B cell (primary cell): ENCODE measurements at regions of chr5 and their contacts with region 1.

Region 1: GRCh38 chr5:148805326-148806290 is 20.8 kb upstream of the ADRB2 start:
- DNase-seq: peak; percentile 42
- ATAC-seq: no peak
- H3K4me3 ChIP-seq: peak overlapping the region in 1 of 5 experiments; percentile 6
- H3K4me3 Mint-ChIP-seq: peak overlapping the region; percentile 51
- H3K27ac ChIP-seq: peak overlapping the region; percentile 40 to 59
- H3K27ac Mint-ChIP-seq: peak overlapping the region; percentile 76
- H3K4me1 ChIP-seq: peaks cover 48 to 58% of the 10 kb centered on the region in 2 donors
- H3K4me1 Mint-ChIP-seq: peaks cover 52% of the 10 kb centered on the region
- H3K27me3 ChIP-seq: no peaks in the 10 kb centered on the region
- H3K27me3 Mint-ChIP-seq: no peaks in the 10 kb centered on the region
- CTCF ChIP-seq: no peak

Region 2: DNA sequence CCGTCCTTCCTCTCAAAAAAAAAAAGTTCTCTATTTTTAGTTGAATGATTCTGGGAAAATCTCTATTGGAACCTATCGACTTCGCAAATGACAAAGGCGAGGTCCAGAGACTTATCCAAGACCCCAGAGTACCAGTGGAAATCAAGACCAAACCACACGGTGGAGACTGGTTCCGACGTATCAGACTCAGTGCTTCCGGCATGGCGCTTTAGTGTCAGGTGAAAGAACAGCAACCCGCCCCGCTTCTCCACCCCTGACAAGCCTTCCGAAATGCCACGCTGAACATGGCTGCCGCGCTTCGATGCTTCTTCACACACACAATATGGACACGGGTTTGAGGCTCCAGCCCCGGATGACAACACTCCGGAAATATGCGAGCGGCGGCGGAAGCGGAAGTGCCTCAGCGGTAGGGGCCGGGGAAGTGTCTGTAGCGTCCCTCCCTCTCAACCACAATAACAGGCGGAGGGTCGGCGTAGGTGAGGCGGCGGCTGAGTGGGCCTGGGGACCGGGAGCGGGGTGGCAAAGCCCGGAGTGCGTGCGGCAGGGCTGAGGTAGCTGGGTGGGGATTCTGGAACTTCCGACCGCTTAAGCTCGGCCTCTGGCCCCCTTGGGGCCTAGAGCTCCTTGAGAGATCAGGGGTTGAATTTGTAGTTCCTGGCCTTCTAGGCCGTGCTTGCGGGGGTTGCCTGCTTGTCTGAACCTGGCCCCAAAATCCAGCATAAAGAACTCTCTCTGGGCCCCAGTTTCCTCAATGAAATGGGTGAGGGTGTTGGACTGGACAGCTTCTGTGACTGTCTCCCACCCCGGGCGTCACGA is 421.8 kb before region 1 on chr5 and contains the start of gene FBXO38:
- CTCF ChIA-PET with region 1: no interaction called
- POLR2A ChIA-PET with region 1: no interaction called
- intact Hi-C with region 1: loop called (anchors 5 kb)
- DNase-seq: peak; percentile 99
- ATAC-seq: peak; percentile 98
- H3K4me3 ChIP-seq: peak within 1 kb of the TSS; percentile 69 to 94 (median 87)
- H3K4me3 Mint-ChIP-seq: peak within 1 kb of the TSS; percentile 88
- H3K27ac ChIP-seq: peak within 1 kb of the TSS; percentile 92 to 96
- H3K27ac Mint-ChIP-seq: peak within 1 kb of the TSS; percentile 92
- H3K4me1 ChIP-seq: peaks cover 24 to 26% of the 10 kb centered on the region in 2 donors
- H3K4me1 Mint-ChIP-seq: peaks cover 51% of the 10 kb centered on the region
- H3K27me3 ChIP-seq: no peaks in the 10 kb centered on the region
- H3K27me3 Mint-ChIP-seq: no peaks in the 10 kb centered on the region
- CTCF ChIP-seq: peak; percentile 24
- total RNA-seq, gene FBXO38: 97.0 and 124 TPM in 2 replicates

Region 3: GRCh38 chr5:148820461-148821395 is 15.1 kb after region 1 on chr5:
- CTCF ChIA-PET with region 1: interaction called, 46 read pairs
- POLR2A ChIA-PET with region 1: interaction called, 3 read pairs
- intact Hi-C with region 1: no loop called
- DNase-seq: peak; percentile 41
- ATAC-seq: no peak
- H3K4me3 ChIP-seq: no peak overlapping the region
- H3K4me3 Mint-ChIP-seq: no peak overlapping the region
- H3K27ac ChIP-seq: no peak overlapping the region
- H3K27ac Mint-ChIP-seq: no peak overlapping the region
- H3K4me1 ChIP-seq: peaks cover 33 to 35% of the 10 kb centered on the region in 2 donors
- H3K4me1 Mint-ChIP-seq: peaks cover 60% of the 10 kb centered on the region
- H3K27me3 ChIP-seq: no peaks in the 10 kb centered on the region
- H3K27me3 Mint-ChIP-seq: no peaks in the 10 kb centered on the region
- CTCF ChIP-seq: peak; percentile 67

Region 4: DNA sequence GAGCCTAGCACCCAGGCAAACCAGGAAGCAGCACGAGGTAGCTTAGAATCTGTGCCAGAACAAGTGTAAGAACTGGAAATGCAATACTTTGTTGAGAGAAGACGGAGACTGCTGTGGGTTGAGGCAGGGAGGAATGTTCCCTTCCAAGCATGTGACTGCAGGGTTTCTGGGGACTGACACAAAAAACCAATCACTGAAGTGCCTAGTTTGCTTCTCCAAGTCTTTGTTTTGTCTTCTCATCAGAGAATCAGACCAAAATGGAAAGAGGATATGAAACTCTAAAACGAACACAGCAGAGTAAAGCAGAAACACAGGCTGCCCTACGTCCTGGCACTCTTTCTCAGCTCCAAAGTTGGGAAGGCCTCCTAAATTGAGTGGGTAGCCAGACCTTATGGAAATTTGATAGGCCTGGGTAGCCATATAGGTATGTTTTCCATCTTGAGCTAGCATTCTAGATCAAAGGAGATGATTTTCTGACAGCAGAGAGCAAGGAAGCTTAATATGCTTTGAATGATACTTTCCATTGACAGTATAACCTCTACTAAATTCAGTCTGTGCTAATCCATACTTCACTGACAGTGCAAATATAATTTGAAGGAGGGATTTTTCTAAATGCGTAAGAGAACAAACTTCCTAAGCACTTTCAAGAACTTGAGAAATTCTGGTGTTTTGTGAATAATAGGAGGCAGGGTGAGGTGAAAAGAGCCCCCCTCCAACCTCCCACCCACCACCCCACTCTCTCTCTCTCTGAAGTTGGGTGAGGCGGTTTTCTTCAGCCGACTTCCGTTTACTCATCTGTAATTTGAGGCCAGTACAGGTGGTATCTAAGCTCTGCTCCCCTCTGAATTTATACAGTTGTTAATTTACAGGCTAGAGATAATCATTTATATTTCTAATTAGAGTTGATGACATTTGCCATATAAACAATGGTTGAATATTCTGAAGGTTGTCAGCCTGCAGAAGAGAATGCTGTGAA is 26.3 kb after region 1 on chr5:
- CTCF ChIA-PET with region 1: interaction called, 12 read pairs
- POLR2A ChIA-PET with region 1: interaction called, 3 read pairs
- intact Hi-C with region 1: loop called (anchors 1 kb)
- DNase-seq: peak; percentile 78
- ATAC-seq: peak; percentile 77
- H3K4me3 ChIP-seq: peak overlapping the region in 4 of 5 experiments; percentile 33 to 53 (median 45)
- H3K4me3 Mint-ChIP-seq: peak overlapping the region; percentile 94
- H3K27ac ChIP-seq: peak overlapping the region; percentile 77 to 78
- H3K27ac Mint-ChIP-seq: peak overlapping the region; percentile 98
- H3K4me1 ChIP-seq: peaks cover 97% of the 10 kb centered on the region in 2 donors
- H3K4me1 Mint-ChIP-seq: peaks cover 94% of the 10 kb centered on the region
- H3K27me3 ChIP-seq: no peaks in the 10 kb centered on the region
- H3K27me3 Mint-ChIP-seq: no peaks in the 10 kb centered on the region
- CTCF ChIP-seq: no peak

Region 5: GRCh38 chr5:149357370-149358293 is 552.0 kb after region 1 on chr5 and contains the start of gene PCYOX1L:
- CTCF ChIA-PET with region 1: no interaction called
- POLR2A ChIA-PET with region 1: no interaction called
- intact Hi-C with region 1: loop called (anchors 10 kb)
- DNase-seq: peak; percentile 95
- ATAC-seq: peak; percentile 99
- H3K4me3 ChIP-seq: peak within 1 kb of the TSS; percentile 38 to 82 (median 76)
- H3K4me3 Mint-ChIP-seq: peak within 1 kb of the TSS; percentile 95
- H3K27ac ChIP-seq: peak within 1 kb of the TSS; percentile 38 to 69
- H3K27ac Mint-ChIP-seq: peak within 1 kb of the TSS; percentile 85
- H3K4me1 ChIP-seq: peaks cover 12 to 15% of the 10 kb centered on the region in 2 donors
- H3K4me1 Mint-ChIP-seq: peaks cover 18% of the 10 kb centered on the region
- H3K27me3 ChIP-seq: no peaks in the 10 kb centered on the region
- H3K27me3 Mint-ChIP-seq: no peaks in the 10 kb centered on the region
- CTCF ChIP-seq: no peak
- total RNA-seq, gene PCYOX1L: 11.7 and 13.5 TPM in 2 replicates

Region 6: DNA sequence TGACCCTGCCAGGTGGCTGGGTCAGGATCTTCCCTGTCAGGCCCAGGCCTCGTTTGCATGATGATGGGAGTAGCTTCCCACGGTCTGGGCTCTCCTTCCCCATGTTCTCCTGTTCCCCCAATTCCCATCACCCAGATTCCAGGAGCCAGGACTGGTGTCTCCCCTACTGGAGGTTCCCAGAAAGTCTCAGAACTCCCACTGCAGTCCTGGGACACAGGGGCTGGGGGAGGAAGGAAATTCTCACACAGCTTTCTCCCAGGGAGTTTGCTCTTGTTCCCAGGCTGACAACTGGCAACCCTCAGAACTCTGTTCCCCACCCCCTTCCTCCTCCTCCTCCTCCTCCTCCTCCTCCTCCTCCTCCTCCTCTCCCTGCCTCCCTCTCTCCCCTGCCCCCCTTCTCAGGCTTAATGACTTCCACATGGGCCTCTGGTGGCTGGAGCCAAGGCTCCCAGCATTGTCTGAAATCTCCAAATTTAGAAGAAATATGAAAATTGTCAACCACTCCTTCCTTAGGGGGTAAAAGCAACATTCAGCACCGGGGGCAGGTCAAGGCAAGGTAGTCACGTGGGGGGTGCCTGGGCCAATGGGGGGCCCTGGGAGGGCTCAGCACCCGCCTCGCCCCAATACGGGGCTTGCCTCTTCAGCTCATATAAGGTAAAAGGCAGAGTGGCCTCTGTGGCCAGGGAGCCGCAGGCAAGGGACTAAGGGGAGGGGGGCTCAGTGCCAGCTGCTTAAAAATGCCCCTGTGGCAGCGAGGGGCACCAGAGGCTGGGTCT is 600.8 kb after region 1 on chr5:
- CTCF ChIA-PET with region 1: no interaction called
- POLR2A ChIA-PET with region 1: no interaction called
- intact Hi-C with region 1: no loop called
- DNase-seq: no peak
- ATAC-seq: no peak
- H3K4me3 ChIP-seq: no peak overlapping the region
- H3K4me3 Mint-ChIP-seq: no peak overlapping the region
- H3K27ac ChIP-seq: no peak overlapping the region
- H3K27ac Mint-ChIP-seq: no peak overlapping the region
- H3K4me1 ChIP-seq: no peaks in the 10 kb centered on the region
- H3K4me1 Mint-ChIP-seq: no peaks in the 10 kb centered on the region
- H3K27me3 ChIP-seq: peaks cover 0 to 3% (median 0%) of the 10 kb centered on the region in 4 experiments
- H3K27me3 Mint-ChIP-seq: peaks cover 19% of the 10 kb centered on the region
- CTCF ChIP-seq: no peak